ENCODE measurements at regions of chrX and their contacts with region 1.

Region 1: GRCh38 chrX:123960042-123960611 is 1.4 kb upstream of the STAG2 start:
- DNase-seq: peak; percentile 94
- H3K4me3 ChIP-seq: peak overlapping the region; percentile 70 to 80 (median 79)
- H3K27ac ChIP-seq: peak overlapping the region; percentile 94 to 99 (median 97)
- H3K4me1 ChIP-seq: peaks cover 0 to 7% (median 3%) of the 10 kb centered on the region in 4 donors
- H3K27me3 ChIP-seq: no peaks in the 10 kb centered on the region
- CTCF ChIP-seq: peak; percentile 53 to 81 (median 66)
- EP300 ChIP-seq: no peak
- POLR2A ChIP-seq: peak; percentile 83

Region 2: DNA sequence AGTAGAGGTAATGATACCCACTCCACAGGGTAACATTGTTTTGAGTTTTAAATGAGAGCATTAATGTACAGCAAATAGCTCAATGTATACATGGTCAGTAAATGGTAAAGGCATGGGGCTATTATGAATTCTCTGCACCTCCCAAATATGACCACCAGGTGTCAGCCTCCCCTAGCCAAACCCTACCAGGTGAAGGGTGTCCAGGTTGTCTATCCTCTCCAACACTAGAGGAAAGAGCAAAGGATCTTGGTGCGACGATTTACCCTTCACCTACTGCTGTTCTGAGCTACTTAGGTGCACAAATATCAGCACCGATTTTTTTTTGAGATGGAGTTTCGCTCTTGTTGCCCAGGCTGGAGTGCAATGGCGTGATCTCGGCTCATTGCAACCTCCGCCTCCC is 126.7 kb before region 1 on chrX:
- intact Hi-C with region 1: loop called (anchors 5 kb)
- DNase-seq: peak; percentile 71
- H3K4me3 ChIP-seq: no peak overlapping the region
- H3K27ac ChIP-seq: no peak overlapping the region
- H3K4me1 ChIP-seq: peaks cover 0 to 4% (median 0%) of the 10 kb centered on the region in 4 donors
- H3K27me3 ChIP-seq: no peaks in the 10 kb centered on the region
- CTCF ChIP-seq: peak; percentile 41 to 66 (median 54)
- EP300 ChIP-seq: no peak
- POLR2A ChIP-seq: no peak

Region 3: GRCh38 chrX:123976706-123977316 is 16.7 kb after region 1 on chrX:
- intact Hi-C with region 1: loop called (anchors 2 kb)
- DNase-seq: no peak
- H3K4me3 ChIP-seq: no peak overlapping the region
- H3K27ac ChIP-seq: peak overlapping the region in 1 of 4 donors; percentile 28
- H3K4me1 ChIP-seq: peaks cover 0 to 78% (median 23%) of the 10 kb centered on the region in 4 donors
- H3K27me3 ChIP-seq: no peaks in the 10 kb centered on the region
- CTCF ChIP-seq: no peak
- EP300 ChIP-seq: no peak
- POLR2A ChIP-seq: no peak

Region 4: GRCh38 chrX:124018023-124018422 is 57.9 kb after region 1 on chrX:
- intact Hi-C with region 1: loop called (anchors 5 kb)
- DNase-seq: no peak
- H3K4me3 ChIP-seq: no peak overlapping the region
- H3K27ac ChIP-seq: no peak overlapping the region
- H3K4me1 ChIP-seq: peaks cover 0 to 39% (median 7%) of the 10 kb centered on the region in 4 donors
- H3K27me3 ChIP-seq: no peaks in the 10 kb centered on the region
- CTCF ChIP-seq: peak in 1 of 4 experiments; percentile 14
- EP300 ChIP-seq: no peak
- POLR2A ChIP-seq: no peak